Left ventricle myocardium superior (tissue), 1 donor: ENCODE measurements at regions of chr14 and their contacts with region 1.

Region 1: GRCh38 chr14:63174760-63175211 is 29.5 kb upstream of the RHOJ start:
- DNase-seq: no peak
- ATAC-seq: peak; percentile 74

Region 2: GRCh38 chr14:62759796-62760195 is 415.0 kb before region 1 on chr14:
- intact Hi-C with region 1: no loop called
- DNase-seq: no peak
- ATAC-seq: no peak

Region 3: DNA sequence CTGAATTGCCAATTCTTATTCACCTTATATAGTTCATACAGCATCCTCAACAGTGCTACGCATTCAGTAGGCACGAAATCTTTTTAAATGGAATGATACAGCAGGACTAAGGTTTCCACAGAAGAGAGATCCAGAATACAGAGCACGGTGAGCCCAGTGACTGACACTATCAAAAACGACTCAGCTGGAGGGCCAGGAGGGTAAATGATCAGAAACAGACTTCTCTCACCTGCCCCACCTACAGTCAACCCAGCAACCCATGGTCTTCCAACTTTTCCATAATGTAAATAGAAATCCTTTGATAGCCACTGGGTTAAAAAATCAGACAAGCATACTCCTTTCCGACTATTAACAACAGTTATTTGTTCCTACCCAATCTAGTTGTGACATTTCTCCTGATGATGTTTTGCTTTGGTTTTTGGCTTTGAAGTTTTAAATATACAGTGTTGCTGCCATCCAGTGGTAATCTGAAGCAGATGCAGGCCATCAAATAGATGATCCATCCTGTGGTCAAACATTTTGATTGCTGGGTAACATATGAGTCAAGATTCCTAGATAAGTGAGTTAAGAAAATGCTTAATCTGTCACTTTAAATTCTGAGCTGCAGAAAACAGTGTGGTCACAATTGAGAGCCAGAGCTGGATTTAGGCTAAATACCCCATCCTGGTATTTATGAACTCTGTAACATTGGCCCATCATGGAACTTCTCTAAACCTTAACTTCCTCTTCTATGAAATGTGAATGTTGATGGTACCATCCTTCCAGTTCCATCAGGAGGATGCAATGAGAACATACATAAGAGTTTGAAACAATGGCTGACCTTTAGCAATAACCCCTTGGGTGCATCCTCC is 101.9 kb after region 1 on chr14:
- intact Hi-C with region 1: loop called (anchors 2 kb)
- DNase-seq: no peak
- ATAC-seq: peak; percentile 19